ENCODE measurements at regions of chr14 and their contacts with region 1.

Region 1: GRCh38 chr14:67111022-67111421 is 78.2 kb upstream of the GARIN2 start:
- DNase-seq: no peak
- CTCF ChIP-seq: no peak

Region 2: DNA sequence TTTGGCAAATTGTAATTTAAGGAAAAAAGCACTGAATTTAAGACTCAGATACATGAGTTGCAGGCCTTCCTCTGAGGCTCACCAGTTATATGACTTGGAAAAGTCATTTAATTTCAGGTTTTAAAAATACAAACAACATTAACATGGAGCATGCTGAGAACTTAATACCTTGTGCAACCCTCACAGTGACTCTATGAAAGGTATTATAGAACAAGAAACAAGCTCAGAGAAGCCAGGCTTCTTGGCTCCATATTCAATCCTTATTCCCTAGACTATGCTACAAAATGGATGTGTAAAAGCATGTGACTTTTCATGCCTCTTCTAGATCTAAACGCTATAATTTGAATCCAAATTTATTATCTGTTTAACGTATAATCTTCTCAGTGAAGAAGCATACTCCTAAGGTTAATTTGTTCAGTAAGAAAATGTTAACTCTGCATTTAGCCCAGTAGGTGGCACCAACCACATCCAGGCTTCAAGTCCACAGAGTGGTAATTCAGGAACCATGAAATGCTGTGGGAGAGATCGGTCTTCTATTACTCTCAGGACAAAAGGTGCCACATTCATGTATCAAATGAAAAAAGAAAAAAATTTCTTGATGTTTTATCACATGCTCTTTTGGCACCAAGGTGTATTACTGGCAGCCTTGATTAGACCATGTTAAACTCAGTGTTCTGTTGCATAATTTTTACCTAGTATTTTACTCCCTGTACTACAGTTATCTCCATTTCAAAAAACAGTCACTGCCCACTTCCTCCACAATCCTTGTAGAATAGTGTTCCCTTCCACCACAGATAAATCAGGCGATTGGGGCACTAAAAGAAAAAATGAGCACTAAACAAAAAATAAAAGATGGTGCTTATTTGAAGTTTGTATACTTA is 615.6 kb before region 1 on chr14:
- in situ Hi-C with region 1: loop called (anchors 25 kb)
- DNase-seq: peak; percentile 35
- CTCF ChIP-seq: peak; percentile 76

Region 3: DNA sequence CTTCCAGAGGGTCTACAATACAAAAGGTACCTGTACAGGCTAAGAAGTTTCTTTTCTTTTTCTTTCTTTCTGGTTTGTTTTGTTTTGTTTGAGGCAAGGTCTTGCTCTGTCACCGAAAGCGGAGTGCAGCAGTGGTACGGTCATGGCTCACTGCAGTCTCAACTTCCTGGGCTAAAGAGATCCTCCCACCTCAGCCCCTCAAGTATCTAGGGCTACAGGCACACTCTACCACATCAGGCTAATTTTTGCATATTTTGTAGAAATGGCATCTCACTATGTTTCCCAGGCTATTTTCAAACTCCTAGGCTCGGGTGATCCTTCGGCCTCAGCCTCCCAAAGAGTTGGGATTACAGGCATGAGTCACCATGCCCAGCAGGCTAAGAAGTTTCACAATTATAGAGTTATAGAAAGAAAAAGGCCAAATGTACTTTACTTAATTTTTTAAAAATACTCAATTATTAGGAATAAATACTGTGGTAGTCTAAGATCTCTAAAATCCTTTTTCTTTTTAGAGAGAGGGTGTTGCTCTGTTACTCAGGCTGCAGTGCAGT is 492.0 kb after region 1 on chr14:
- in situ Hi-C with region 1: no loop called
- DNase-seq: no peak
- CTCF ChIP-seq: no peak